Activated B cell treated with CpG ODN at 0.5 μM for 24 hours (primary cell): ENCODE measurements at regions of chr19 and their contacts with region 1.

Region 1: DNA sequence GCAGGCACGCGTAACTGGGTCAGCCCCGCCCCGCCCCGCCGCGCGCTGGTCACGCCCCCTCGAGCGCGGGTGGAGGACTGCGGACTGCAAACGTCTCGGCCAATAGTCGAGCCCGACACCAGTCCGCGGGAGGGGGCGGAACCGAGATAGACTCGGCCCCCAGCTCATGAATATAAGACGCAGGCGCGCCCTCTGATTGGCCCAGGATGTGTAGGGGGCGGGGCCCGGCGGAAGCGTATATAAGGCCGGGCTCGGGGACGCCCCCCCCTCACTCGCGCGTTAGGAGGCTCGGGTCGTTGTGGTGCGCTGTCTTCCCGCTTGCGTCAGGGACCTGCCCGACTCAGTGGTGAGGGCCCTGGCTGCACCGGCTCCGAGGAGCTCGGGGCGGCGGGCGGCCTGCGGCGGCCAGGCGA is at the start of gene CIRBP:
- DNase-seq: peak; percentile 99
- ATAC-seq: peak; percentile 72
- H3K4me3 Mint-ChIP-seq: peak within 1 kb of the TSS; percentile 86
- H3K27ac Mint-ChIP-seq: peak within 1 kb of the TSS; percentile 85
- H3K4me1 Mint-ChIP-seq: peaks cover 79% of the 10 kb centered on the region
- H3K27me3 Mint-ChIP-seq: no peaks in the 10 kb centered on the region
- CTCF ChIP-seq: no peak
- total RNA-seq, gene CIRBP: 399 and 400 TPM in 2 replicates

Region 2: GRCh38 chr19:892243-893050 is 376.6 kb before region 1 on chr19:
- CTCF ChIA-PET with region 1: no interaction called
- POLR2A ChIA-PET with region 1: interaction called, 13 read pairs
- intact Hi-C with region 1: no loop called
- DNase-seq: no peak
- ATAC-seq: peak; percentile 57
- H3K4me3 Mint-ChIP-seq: peak overlapping the region; percentile 91
- H3K27ac Mint-ChIP-seq: peak overlapping the region; percentile 99
- H3K4me1 Mint-ChIP-seq: peaks cover 21% of the 10 kb centered on the region
- H3K27me3 Mint-ChIP-seq: no peaks in the 10 kb centered on the region
- CTCF ChIP-seq: no peak

Region 3: GRCh38 chr19:1020868-1021425 is 248.1 kb before region 1 on chr19 and contains the start of gene TMEM259:
- CTCF ChIA-PET with region 1: no interaction called
- POLR2A ChIA-PET with region 1: interaction called, 14 read pairs
- intact Hi-C with region 1: no loop called
- DNase-seq: peak; percentile 95
- ATAC-seq: peak; percentile 87
- H3K4me3 Mint-ChIP-seq: peak within 1 kb of the TSS; percentile 87
- H3K27ac Mint-ChIP-seq: peak within 1 kb of the TSS; percentile 99
- H3K4me1 Mint-ChIP-seq: peaks cover 53% of the 10 kb centered on the region
- H3K27me3 Mint-ChIP-seq: no peaks in the 10 kb centered on the region
- CTCF ChIP-seq: no peak
- total RNA-seq, gene TMEM259: 223 and 257 TPM in 2 replicates

Region 4: GRCh38 chr19:1074544-1075283 is 194.4 kb before region 1 on chr19:
- CTCF ChIA-PET with region 1: no interaction called
- POLR2A ChIA-PET with region 1: interaction called, 18 read pairs
- intact Hi-C with region 1: no loop called
- DNase-seq: peak; percentile 82
- ATAC-seq: peak; percentile 37
- H3K4me3 Mint-ChIP-seq: peak overlapping the region; percentile 53
- H3K27ac Mint-ChIP-seq: peak overlapping the region; percentile 93
- H3K4me1 Mint-ChIP-seq: peaks cover 62% of the 10 kb centered on the region
- H3K27me3 Mint-ChIP-seq: no peaks in the 10 kb centered on the region
- CTCF ChIP-seq: no peak

Region 5: DNA sequence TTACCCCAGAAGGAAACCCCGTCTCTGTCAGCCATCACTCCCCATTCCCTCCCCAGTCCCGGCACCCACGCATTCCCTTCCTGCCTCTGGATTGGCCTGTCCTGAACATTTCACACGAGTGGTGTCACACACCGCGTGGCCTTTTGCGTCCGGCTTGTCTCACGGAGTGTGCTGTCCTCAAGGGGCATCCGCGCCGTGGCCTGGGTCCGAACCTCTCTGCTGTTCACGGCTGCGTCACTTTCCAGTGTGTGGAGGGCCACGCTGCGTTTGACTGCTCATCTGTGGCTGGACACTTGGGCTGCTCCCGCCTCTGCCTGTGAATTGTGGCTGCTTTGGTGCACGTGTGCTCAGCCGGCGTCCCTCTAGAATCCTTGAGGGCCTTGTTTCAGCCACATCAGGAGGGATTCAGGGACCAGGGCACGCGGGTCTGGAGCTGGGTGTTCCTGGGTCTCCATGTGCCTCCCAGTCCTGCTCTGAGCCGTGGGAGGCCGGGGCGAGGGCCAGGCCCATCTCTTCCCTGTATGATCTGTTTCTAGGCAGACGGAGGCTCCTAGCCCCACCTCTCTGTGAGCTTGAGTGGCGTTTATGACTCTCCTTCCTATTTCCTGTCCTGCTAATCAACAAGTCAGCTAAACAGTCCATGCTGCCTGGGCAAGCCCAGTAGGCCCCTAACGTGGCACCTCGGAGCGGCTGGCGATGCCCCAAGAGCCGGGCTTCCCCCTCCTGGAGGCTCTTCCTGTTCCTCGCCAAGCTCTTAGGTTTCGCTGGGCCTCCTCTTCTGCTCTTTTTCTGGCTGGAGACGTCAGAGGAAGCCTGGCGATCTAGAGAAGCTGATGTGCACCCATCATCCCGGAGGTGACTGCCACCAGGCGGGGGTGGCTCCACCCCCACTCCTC is 55.4 kb before region 1 on chr19:
- CTCF ChIA-PET with region 1: no interaction called
- POLR2A ChIA-PET with region 1: interaction called, 11 read pairs
- intact Hi-C with region 1: no loop called
- DNase-seq: no peak
- ATAC-seq: peak; percentile 77
- H3K4me3 Mint-ChIP-seq: peak overlapping the region; percentile 67
- H3K27ac Mint-ChIP-seq: peak overlapping the region; percentile 83
- H3K4me1 Mint-ChIP-seq: peaks cover 32% of the 10 kb centered on the region
- H3K27me3 Mint-ChIP-seq: no peaks in the 10 kb centered on the region
- CTCF ChIP-seq: no peak

Region 6: DNA sequence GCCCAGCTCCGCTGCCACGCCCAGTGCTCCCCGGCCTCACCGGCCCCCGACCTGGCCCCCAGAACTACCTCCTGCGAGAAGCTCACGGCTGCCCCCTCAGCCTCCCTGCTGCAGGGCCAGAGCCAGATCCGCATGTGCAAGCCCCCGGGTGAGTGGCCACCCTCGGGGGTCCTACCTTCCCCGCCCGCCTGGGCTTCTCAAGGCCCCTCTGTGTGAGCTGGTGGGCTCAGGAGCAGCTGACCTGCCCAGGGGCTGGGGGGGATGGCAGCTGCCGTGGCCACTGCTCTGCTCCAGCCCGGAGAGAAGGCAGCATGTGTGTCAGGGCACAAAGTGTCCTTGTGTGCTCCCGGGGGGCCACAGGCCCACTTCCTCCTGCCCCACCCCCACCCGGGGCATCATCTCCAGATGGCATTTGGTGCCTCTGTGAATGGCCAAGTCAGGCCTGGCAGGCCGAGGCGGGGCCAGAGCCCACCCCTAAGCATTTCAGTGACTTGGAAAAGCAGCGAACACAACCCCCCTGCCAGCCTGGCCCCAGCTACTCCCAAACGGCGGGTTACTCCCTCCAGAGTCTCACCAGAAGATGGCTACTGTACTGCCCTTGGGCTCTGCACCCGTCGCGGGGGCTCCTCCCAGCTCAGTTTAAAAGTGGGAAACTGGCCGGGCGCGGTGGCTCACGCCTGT is 13.4 kb before region 1 on chr19:
- CTCF ChIA-PET with region 1: interaction called, 26 read pairs
- POLR2A ChIA-PET with region 1: interaction called, 283 read pairs
- intact Hi-C with region 1: no loop called
- DNase-seq: no peak
- ATAC-seq: no peak
- H3K4me3 Mint-ChIP-seq: no peak overlapping the region
- H3K27ac Mint-ChIP-seq: peak overlapping the region; percentile 18
- H3K4me1 Mint-ChIP-seq: peaks cover 70% of the 10 kb centered on the region
- H3K27me3 Mint-ChIP-seq: no peaks in the 10 kb centered on the region
- CTCF ChIP-seq: no peak

Region 7: DNA sequence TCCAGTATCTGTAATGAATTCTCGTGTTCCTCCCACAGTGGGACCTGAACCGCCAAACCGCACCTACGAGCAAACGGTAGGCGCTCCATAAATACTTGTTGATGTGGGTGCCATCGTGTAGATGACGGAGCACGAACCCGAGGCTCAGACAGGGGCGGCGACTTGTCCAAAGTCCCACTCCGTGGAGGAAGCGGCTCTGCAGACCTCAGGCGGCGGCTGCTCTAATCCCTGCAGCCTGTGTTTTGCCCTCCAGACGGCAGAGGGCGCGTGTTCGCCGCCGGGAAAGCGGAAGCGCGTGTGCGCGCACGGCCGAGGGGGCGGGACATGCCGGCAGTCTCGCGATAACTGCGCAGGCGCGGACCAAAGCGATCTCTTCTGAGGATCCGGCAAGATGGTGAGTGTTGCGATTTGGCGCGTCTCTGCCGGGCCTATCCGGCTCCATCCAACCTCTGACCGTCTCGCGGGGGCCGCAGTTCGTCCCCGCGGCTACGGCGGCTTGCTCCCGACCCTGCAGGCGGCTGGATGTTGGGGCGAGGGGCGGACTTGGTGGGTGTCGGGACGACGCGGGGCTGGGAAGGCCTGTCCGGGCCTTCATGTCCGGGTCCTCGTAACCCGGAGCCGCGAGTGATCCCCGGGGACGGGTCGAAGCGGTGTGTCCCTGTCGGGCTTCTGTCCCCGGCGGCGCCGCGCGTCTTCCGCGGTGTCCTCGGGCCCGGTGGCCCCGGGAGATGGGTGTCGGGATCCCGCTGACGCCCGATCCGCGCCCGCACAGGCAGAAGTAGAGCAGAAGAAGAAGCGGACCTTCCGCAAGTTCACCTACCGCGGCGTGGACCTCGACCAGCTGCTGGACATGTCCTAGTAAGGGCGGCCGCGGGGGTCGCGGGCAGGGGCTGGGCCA is 169.2 kb after region 1 on chr19 and contains the start of gene RPS15:
- CTCF ChIA-PET with region 1: no interaction called
- POLR2A ChIA-PET with region 1: interaction called, 15 read pairs
- intact Hi-C with region 1: no loop called
- DNase-seq: peak; percentile 94
- ATAC-seq: peak; percentile 92
- H3K4me3 Mint-ChIP-seq: peak within 1 kb of the TSS; percentile 99
- H3K27ac Mint-ChIP-seq: peak within 1 kb of the TSS; percentile 99
- H3K4me1 Mint-ChIP-seq: peaks cover 26% of the 10 kb centered on the region
- H3K27me3 Mint-ChIP-seq: no peaks in the 10 kb centered on the region
- CTCF ChIP-seq: no peak
- total RNA-seq, gene RPS15: 1,788 and 2,029 TPM in 2 replicates